Mammary epithelial cell (primary cell): ENCODE measurements at regions of chr17 and their contacts with region 1.

Region 1: GRCh38 chr17:16886655-16887322 is 85.1 kb downstream of the TNFRSF13B start:
- DNase-seq: no peak
- H3K4me3 ChIP-seq: no peak overlapping the region
- H3K27ac ChIP-seq: no peak overlapping the region
- H3K4me1 ChIP-seq: no peaks in the 10 kb centered on the region
- H3K27me3 ChIP-seq: no peaks in the 10 kb centered on the region
- CTCF ChIP-seq: no peak

Region 2: DNA sequence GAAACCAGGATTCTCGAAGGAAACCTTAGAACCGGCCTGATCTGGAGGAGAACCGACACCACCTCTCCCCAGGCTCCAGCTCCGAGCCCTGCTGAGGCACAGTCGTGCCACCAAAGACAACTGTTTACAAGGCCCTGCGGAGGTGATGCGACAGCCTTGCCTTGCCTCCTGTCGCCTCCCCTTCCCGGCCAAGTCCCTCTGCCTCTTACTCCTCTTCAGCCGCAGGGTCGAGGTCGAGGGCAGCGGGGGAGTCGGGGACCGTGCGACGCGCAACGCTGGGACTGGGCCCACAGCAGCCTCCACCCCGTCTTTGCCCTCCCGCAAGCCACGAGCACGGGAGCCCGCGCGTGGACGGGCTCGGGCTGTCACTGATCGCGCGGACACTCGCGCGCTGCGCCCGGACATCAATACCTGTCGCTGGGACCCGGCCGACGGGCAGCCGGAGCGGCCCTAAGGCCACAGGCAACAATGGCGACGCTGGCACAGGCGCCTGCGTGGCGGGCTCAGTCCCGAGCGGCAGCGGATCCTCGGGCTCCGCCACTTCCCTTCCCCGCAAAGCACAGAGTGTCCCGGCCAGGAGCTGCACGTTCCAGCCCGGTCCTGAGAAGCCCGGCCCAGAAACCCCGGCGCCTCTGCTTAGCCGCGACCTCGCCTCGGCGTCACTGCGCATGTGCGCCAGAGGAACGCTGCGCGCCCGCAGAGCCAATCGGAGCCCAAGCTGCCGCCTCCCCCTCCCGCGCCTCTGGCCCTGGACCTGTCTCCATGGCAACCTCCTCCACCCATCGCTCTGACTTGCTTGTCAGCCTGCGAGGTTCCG is 318.0 kb before region 1 on chr17 and contains the start of gene ZNF287:
- CTCF ChIA-PET with region 1: no interaction called
- dilution Hi-C with region 1: loop called (anchors 25 kb)
- in situ Hi-C with region 1: no loop called
- intact Hi-C with region 1: no loop called
- DNase-seq: peak; percentile 81
- H3K4me3 ChIP-seq: peak within 1 kb of the TSS; percentile 55 to 77 (median 77)
- H3K27ac ChIP-seq: no peak within 1 kb of the TSS
- H3K4me1 ChIP-seq: peaks cover 6% of the 10 kb centered on the region
- H3K27me3 ChIP-seq: no peaks in the 10 kb centered on the region
- CTCF ChIP-seq: no peak
- total RNA-seq, gene ZNF287: 6.6 to 6.7 TPM

Region 3: GRCh38 chr17:16962818-16963217 is 76.0 kb after region 1 on chr17:
- CTCF ChIA-PET with region 1: no interaction called
- dilution Hi-C with region 1: no loop called
- in situ Hi-C with region 1: no loop called
- intact Hi-C with region 1: no loop called
- DNase-seq: no peak
- H3K4me3 ChIP-seq: no peak overlapping the region
- H3K27ac ChIP-seq: no peak overlapping the region
- H3K4me1 ChIP-seq: no peaks in the 10 kb centered on the region
- H3K27me3 ChIP-seq: no peaks in the 10 kb centered on the region
- CTCF ChIP-seq: no peak

Region 4: GRCh38 chr17:16973760-16974540 is 87.2 kb after region 1 on chr17:
- CTCF ChIA-PET with region 1: no interaction called
- dilution Hi-C with region 1: loop called (anchors 5 kb)
- in situ Hi-C with region 1: no loop called
- intact Hi-C with region 1: no loop called
- DNase-seq: no peak
- H3K4me3 ChIP-seq: no peak overlapping the region
- H3K27ac ChIP-seq: no peak overlapping the region
- H3K4me1 ChIP-seq: no peaks in the 10 kb centered on the region
- H3K27me3 ChIP-seq: peaks cover 2% of the 10 kb centered on the region
- CTCF ChIP-seq: no peak

Region 5: DNA sequence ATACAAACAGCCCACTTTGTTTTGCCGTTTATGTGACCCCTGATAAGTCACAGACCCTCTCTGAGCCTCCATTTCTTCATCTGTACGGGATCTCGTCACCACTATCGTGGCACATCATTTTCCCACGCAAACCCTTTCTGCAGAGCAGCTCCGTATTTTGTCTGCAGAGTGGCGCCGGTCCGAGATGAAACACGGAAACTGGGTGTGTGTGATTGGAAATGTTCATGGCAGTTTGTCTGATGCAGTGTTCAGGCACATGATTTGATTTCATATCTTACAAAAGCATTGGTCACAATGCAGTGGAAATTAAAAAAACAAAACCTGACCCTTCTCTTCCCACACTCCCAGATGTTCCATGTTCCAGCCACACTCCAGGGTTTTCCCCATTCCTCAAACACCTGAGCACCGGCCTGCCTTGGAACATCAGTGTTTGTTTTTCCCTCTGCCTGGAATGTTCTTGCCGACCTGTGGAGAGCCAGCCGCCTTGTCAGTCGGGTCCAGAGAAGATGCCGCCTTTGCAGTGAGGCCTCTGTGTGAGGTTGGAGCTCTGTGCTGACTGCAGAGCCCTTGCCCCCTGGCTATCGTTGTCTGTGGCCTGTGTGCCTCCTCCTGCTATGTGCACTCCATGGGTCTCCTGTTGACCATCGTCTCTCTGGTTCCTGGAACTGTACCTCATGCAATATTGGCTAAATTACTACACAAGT is 455.6 kb after region 1 on chr17:
- CTCF ChIA-PET with region 1: no interaction called
- dilution Hi-C with region 1: no loop called
- in situ Hi-C with region 1: no loop called
- intact Hi-C with region 1: no loop called
- DNase-seq: no peak
- H3K4me3 ChIP-seq: no peak overlapping the region
- H3K27ac ChIP-seq: no peak overlapping the region
- H3K4me1 ChIP-seq: no peaks in the 10 kb centered on the region
- H3K27me3 ChIP-seq: no peaks in the 10 kb centered on the region
- CTCF ChIP-seq: no peak